AG04450 (cell line): ENCODE measurements at regions of chr3 and their contacts with region 1.

Region 1: DNA sequence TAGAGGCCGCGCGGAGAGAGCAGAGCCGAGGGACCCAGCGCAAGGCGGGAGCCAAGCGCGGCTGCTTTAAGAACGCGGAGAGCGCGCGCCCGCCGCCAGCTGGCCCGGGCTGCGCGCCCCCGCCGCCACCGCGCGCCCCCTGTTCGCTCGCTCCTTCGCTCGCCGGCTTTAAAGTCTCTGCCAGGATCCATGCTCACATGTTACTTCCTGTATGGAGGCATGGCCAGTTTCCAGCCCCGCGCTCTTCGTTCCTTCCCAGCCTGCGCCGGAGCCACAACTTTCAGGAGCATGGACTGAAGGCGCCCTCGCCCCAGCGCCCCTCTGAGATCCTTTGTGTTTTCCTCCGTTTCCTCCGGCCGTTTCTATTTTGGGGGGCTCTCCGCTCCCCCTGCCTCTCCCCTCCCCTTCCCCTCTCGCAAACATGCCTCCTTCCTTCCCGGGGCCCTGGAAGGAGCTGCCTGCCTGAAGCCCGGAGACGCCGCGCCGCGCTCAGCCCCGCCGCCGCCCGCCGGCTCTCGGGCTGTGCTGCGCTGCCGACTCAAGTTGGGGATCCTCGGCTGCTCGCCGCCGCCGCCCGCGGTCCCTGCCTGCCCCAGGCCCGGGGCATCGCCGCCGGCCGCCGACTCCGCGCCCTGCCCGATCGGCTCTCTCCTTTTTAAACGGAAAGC is at the start of gene PTPRG:
- DNase-seq: peak; percentile 83
- H3K4me3 ChIP-seq: peak within 1 kb of the TSS; percentile 86
- H3K27ac ChIP-seq: peak within 1 kb of the TSS; percentile 96
- H3K27me3 ChIP-seq: no peaks in the 10 kb centered on the region
- CTCF ChIP-seq: no peak
- polyA plus RNA-seq, gene PTPRG: 24.2 and 26.5 TPM in 2 replicates

Region 2: GRCh38 chr3:61520966-61521628 is 40.4 kb before region 1 on chr3:
- CTCF ChIA-PET with region 1: no interaction called
- POLR2A ChIA-PET with region 1: no interaction called
- DNase-seq: no peak
- H3K4me3 ChIP-seq: no peak overlapping the region
- H3K27ac ChIP-seq: no peak overlapping the region
- H3K27me3 ChIP-seq: peaks cover 10% of the 10 kb centered on the region
- CTCF ChIP-seq: no peak

Region 3: GRCh38 chr3:61858056-61858455 is 296.5 kb after region 1 on chr3:
- CTCF ChIA-PET with region 1: interaction called, 15 read pairs
- POLR2A ChIA-PET with region 1: no interaction called
- DNase-seq: no peak
- H3K4me3 ChIP-seq: no peak overlapping the region
- H3K27ac ChIP-seq: no peak overlapping the region
- H3K27me3 ChIP-seq: no peaks in the 10 kb centered on the region
- CTCF ChIP-seq: peak; percentile 57

Region 4: DNA sequence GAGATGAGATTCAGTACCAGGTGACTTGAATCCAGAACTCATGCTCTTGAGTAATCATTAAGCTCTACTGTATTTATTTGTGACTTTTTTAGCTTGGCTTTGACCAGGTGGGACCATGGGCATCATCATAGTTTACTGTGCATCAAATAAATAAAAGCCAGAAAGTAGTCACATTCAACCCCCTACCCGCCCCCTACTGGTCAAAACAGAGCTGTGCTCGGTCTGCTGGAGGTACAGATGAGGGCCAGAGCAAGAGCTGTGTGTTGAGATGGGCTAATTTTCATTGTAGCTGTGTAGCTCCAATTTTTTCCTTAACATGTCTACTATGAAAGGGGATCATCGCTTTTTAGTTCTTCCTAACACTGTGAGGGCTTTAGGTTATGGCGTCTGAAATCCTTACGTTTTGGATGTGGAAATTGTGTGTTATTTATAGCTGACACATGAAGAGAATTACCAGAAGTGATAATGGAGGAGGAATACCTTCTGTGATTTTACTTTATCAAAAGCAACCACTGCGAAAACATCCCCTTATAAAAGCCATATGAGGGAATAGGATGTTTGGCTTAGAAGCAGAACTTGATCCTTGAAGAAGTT is 374.9 kb after region 1 on chr3:
- CTCF ChIA-PET with region 1: interaction called, 14 read pairs
- POLR2A ChIA-PET with region 1: no interaction called
- DNase-seq: no peak
- H3K4me3 ChIP-seq: no peak overlapping the region
- H3K27ac ChIP-seq: no peak overlapping the region
- H3K27me3 ChIP-seq: no peaks in the 10 kb centered on the region
- CTCF ChIP-seq: peak; percentile 65

Region 5: DNA sequence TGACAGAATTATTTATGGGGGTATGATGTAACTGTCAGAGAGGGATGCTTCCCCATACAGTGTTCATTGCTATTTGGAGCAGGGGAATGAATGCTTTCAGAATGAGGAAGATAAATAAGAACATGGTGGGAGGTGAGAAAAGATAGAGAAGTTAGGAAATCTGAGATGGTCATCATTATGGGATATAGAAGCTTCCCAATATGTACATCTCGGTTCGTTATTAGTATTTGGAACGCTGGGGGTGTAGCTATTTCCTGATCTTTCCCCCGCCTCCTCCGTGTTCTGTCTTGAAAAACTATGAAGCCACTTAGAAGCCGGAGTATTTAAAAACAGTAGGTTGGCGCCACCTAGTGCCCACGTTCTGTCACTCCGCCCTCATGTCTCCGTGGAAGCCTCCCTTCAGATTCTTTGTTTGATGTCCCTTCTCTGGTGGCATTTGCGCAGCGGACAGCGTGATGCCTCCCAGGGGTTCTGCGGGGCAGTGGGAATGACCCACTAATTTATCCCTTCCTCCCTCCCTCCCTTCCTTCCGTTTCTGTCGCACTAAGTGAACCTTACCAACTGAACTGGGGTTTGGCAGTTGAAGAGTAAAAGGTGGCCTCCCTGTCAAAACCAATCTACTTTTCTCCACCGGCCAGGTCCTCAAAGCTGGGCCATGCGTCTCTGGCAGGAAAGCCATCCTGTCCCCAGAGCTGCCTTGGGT is 627.3 kb after region 1 on chr3:
- CTCF ChIA-PET with region 1: interaction called, 61 read pairs
- POLR2A ChIA-PET with region 1: interaction called, 4 read pairs
- DNase-seq: peak; percentile 54
- H3K4me3 ChIP-seq: no peak overlapping the region
- H3K27ac ChIP-seq: no peak overlapping the region
- H3K27me3 ChIP-seq: no peaks in the 10 kb centered on the region
- CTCF ChIP-seq: peak; percentile 81